WTC11 (cell line): ENCODE measurements at regions of chr7 and their contacts with region 1.

Region 1: DNA sequence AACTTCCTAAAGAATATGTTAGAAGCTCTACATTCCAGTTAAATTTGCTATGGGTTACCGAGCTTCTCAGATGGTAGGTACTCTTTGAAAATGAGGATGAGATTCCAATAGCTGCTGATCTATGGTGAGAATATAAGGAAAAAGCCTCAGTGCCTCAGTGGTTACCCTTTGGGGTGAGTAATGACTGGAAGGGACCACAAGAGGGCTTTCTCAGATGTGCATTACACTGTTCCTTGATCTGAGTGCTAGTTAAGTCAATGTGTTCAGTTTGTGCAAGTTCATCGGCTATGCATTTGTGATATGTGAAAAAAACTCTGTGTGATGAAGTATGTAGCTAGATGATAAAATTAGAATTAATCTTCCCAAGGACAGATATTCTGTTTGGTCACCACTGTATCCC is 3.5 kb downstream of the NRCAM start:
- DNase-seq: no peak
- ATAC-seq: 0 out of 2 replicates have a peak, but pooled peaks have one; percentile 3
- H3K4me3 Mint-ChIP-seq: no peak overlapping the region
- H3K27ac Mint-ChIP-seq: no peak overlapping the region
- H3K4me1 Mint-ChIP-seq: peaks cover 33% of the 10 kb centered on the region
- H3K27me3 Mint-ChIP-seq: peaks cover 41% of the 10 kb centered on the region
- CTCF ChIP-seq: peak; percentile 37

Region 2: DNA sequence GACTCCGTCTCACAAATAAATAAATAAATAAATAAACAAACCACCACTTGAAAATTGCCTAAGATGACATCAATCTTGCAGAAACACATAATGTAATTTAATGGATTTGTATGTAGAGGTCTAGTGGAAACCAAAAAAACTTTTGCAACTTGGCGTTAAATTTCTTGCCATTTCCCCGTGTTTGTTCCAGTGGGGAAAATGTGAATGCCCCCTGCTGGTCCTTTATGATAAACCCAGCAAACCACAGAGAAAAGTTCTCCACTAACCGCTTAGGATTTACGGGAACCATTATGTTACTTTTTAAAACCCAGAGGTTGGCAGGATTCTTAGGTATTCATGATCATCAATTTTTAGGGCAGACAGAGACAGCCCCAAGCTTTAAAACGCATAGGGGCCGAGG is 355.0 kb before region 1 on chr7:
- CTCF ChIA-PET with region 1: no interaction called
- POLR2A ChIA-PET with region 1: no interaction called
- DNase-seq: no peak
- ATAC-seq: no peak
- H3K4me3 Mint-ChIP-seq: no peak overlapping the region
- H3K27ac Mint-ChIP-seq: no peak overlapping the region
- H3K4me1 Mint-ChIP-seq: no peaks in the 10 kb centered on the region
- H3K27me3 Mint-ChIP-seq: no peaks in the 10 kb centered on the region
- CTCF ChIP-seq: no peak; the same call in 1 of the 2 replicates

Region 3: DNA sequence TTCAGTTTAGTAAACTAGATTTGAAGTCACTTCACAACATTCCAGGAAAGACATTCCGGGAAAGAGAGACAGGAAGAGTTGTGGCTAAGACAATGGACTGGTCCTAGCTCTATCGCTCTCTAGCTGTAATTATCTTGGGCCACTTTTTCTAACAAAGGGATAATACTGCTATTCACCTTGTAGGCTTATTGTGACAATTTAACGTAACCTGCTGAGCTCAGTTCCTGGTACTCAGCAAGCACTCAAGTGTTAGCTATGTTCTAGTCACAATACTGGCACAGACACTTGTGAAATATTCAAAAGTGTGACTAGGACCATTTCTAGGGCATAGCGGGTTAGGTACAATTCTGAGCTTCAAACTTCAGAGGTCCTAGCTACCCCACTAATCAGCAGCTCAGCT is 15.5 kb after region 1 on chr7:
- CTCF ChIA-PET with region 1: interaction called, 10 read pairs
- POLR2A ChIA-PET with region 1: interaction called, 3 read pairs
- DNase-seq: no peak
- ATAC-seq: peak; percentile 78
- H3K4me3 Mint-ChIP-seq: no peak overlapping the region
- H3K27ac Mint-ChIP-seq: no peak overlapping the region
- H3K4me1 Mint-ChIP-seq: peaks cover 13% of the 10 kb centered on the region
- H3K27me3 Mint-ChIP-seq: no peaks in the 10 kb centered on the region
- CTCF ChIP-seq: no peak

Region 4: GRCh38 chr7:108497082-108497725 is 44.5 kb after region 1 on chr7:
- CTCF ChIA-PET with region 1: interaction called, 16 read pairs
- POLR2A ChIA-PET with region 1: no interaction called
- DNase-seq: peak; percentile 48
- ATAC-seq: peak; percentile 77
- H3K4me3 Mint-ChIP-seq: no peak overlapping the region
- H3K27ac Mint-ChIP-seq: no peak overlapping the region
- H3K4me1 Mint-ChIP-seq: no peaks in the 10 kb centered on the region
- H3K27me3 Mint-ChIP-seq: no peaks in the 10 kb centered on the region
- CTCF ChIP-seq: peak; percentile 75

Region 5: GRCh38 chr7:108525985-108526767 is 73.5 kb after region 1 on chr7 and contains the start of gene PNPLA8:
- CTCF ChIA-PET with region 1: interaction called, 7 read pairs
- POLR2A ChIA-PET with region 1: interaction called, 14 read pairs
- DNase-seq: peak; percentile 100
- ATAC-seq: peak; percentile 88
- H3K4me3 Mint-ChIP-seq: peak within 1 kb of the TSS; percentile 91
- H3K27ac Mint-ChIP-seq: peak within 1 kb of the TSS; percentile 99
- H3K4me1 Mint-ChIP-seq: peaks cover 38% of the 10 kb centered on the region
- H3K27me3 Mint-ChIP-seq: no peaks in the 10 kb centered on the region
- CTCF ChIP-seq: no peak
- total RNA-seq, gene PNPLA8: 11.1 to 12.4 TPM (median 11.4 TPM) in 3 replicates